Natural killer cell (primary cell): ENCODE measurements at regions of chr7 and their contacts with region 1.

Region 1: DNA sequence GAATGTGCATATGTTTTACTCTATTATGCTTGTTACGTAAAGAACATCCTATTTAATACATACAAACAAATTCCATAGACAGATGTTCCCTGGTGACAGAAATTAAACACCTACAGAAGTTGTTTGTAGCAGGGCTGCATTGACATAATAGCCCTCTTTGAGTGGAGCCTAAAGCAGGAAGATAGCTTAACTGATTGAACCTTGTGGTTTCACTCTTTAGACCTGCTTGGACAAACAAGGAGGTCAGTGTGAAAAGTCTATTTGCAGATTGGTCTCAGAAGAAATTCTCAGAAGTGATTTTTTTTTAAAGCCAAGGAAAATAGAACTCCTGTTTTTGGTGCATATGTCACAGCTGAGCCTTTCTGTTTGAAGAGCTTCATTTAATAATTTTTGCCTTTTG is 121.3 kb downstream of the PPP1R9A start:
- DNase-seq: no peak
- ATAC-seq: peak in 1 of 3 donors; percentile 13
- H3K4me3 ChIP-seq: no peak overlapping the region
- H3K4me3 Mint-ChIP-seq: peak overlapping the region; percentile 42
- H3K27ac ChIP-seq: peak overlapping the region; percentile 27
- H3K27ac Mint-ChIP-seq: peak overlapping the region; percentile 18 to 64
- H3K4me1 ChIP-seq: peaks cover 12% of the 10 kb centered on the region
- H3K4me1 Mint-ChIP-seq: peaks cover 13 to 17% of the 10 kb centered on the region in 2 donors
- H3K27me3 ChIP-seq: no peaks in the 10 kb centered on the region
- H3K27me3 Mint-ChIP-seq: no peaks in the 10 kb centered on the region
- CTCF ChIP-seq: no peak

Region 2: DNA sequence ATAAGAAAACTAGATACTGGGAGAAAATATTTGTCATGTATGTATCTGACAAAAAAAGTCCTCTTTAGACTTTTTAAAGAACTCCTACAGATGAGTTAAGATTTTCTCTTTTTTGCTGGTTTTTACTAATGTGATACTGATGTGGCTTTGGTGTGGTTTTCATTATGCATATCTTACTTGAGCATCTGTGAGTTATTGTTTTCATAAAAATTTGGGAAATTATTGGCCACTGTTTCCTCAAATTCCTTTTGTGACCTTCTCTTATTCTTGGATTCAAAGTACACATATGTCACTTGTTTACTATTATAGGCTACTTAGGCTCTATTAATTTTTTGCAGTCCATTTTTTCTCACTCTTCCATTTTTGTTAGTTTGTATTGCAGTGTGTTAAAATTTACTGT is 32.3 kb before region 1 on chr7:
- intact Hi-C with region 1: no loop called
- DNase-seq: no peak
- ATAC-seq: no peak
- H3K4me3 ChIP-seq: no peak overlapping the region
- H3K4me3 Mint-ChIP-seq: no peak overlapping the region
- H3K27ac ChIP-seq: no peak overlapping the region
- H3K27ac Mint-ChIP-seq: no peak overlapping the region
- H3K4me1 ChIP-seq: no peaks in the 10 kb centered on the region
- H3K4me1 Mint-ChIP-seq: no peaks in the 10 kb centered on the region
- H3K27me3 ChIP-seq: no peaks in the 10 kb centered on the region
- H3K27me3 Mint-ChIP-seq: no peaks in the 10 kb centered on the region
- CTCF ChIP-seq: no peak

Region 3: GRCh38 chr7:95066736-95067530 is 38.2 kb after region 1 on chr7:
- intact Hi-C with region 1: loop called (anchors 1 kb)
- DNase-seq: no peak
- ATAC-seq: no peak
- H3K4me3 ChIP-seq: no peak overlapping the region
- H3K4me3 Mint-ChIP-seq: no peak overlapping the region
- H3K27ac ChIP-seq: no peak overlapping the region
- H3K27ac Mint-ChIP-seq: no peak overlapping the region
- H3K4me1 ChIP-seq: no peaks in the 10 kb centered on the region
- H3K4me1 Mint-ChIP-seq: no peaks in the 10 kb centered on the region
- H3K27me3 ChIP-seq: no peaks in the 10 kb centered on the region
- H3K27me3 Mint-ChIP-seq: no peaks in the 10 kb centered on the region
- CTCF ChIP-seq: no peak

Region 4: GRCh38 chr7:95126053-95126709 is 97.5 kb after region 1 on chr7:
- intact Hi-C with region 1: no loop called
- DNase-seq: no peak
- ATAC-seq: no peak
- H3K4me3 ChIP-seq: no peak overlapping the region
- H3K4me3 Mint-ChIP-seq: no peak overlapping the region
- H3K27ac ChIP-seq: no peak overlapping the region
- H3K27ac Mint-ChIP-seq: no peak overlapping the region
- H3K4me1 ChIP-seq: no peaks in the 10 kb centered on the region
- H3K4me1 Mint-ChIP-seq: no peaks in the 10 kb centered on the region
- H3K27me3 ChIP-seq: no peaks in the 10 kb centered on the region
- H3K27me3 Mint-ChIP-seq: no peaks in the 10 kb centered on the region
- CTCF ChIP-seq: no peak